CD4-positive, alpha-beta T cell (primary cell): ENCODE measurements at regions of chr15 and their contacts with region 1.

Region 1: DNA sequence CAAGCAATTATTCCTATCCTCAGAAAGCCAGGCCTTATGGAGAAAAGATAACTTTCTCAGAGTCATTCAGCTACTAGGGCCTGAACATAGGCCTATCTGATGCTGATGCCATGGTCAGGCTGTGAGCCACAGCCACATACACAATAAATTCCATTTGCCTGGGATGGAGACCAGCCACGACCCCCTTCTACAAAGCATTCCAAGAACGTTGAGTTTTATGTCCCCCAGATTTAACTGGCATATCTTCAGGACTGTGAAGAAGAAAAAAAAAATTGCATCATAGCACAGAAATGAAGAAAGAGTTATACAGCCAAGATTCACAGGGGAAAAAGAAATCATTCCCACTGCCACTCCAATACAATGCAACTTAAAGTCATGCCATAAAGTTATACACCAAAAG is 100.0 kb downstream of the THBS1 start:
- DNase-seq: no peak
- ATAC-seq: no peak
- H3K4me3 ChIP-seq: no peak overlapping the region
- H3K4me3 Mint-ChIP-seq: no peak overlapping the region
- H3K27ac ChIP-seq: no peak overlapping the region
- H3K27ac Mint-ChIP-seq: no peak overlapping the region
- H3K4me1 ChIP-seq: no peaks in the 10 kb centered on the region
- H3K4me1 Mint-ChIP-seq: no peaks in the 10 kb centered on the region
- H3K27me3 ChIP-seq: no peaks in the 10 kb centered on the region
- H3K27me3 Mint-ChIP-seq: no peaks in the 10 kb centered on the region
- CTCF ChIP-seq: no peak

Region 2: GRCh38 chr15:39594056-39594763 is 86.7 kb before region 1 on chr15:
- CTCF ChIA-PET with region 1: interaction called, 3 read pairs
- POLR2A ChIA-PET with region 1: no interaction called
- intact Hi-C with region 1: loop called in 1 of 2 experiments (anchors 5 kb)
- DNase-seq: peak in 6 of 14 experiments; percentile 10 to 72 (median 56)
- ATAC-seq: no peak
- H3K4me3 ChIP-seq: no peak overlapping the region
- H3K4me3 Mint-ChIP-seq: no peak overlapping the region
- H3K27ac ChIP-seq: no peak overlapping the region
- H3K27ac Mint-ChIP-seq: no peak overlapping the region
- H3K4me1 ChIP-seq: no peaks in the 10 kb centered on the region
- H3K4me1 Mint-ChIP-seq: no peaks in the 10 kb centered on the region
- H3K27me3 ChIP-seq: no peaks in the 10 kb centered on the region
- H3K27me3 Mint-ChIP-seq: peaks cover 4% of the 10 kb centered on the region
- CTCF ChIP-seq: peak; percentile 38